Aorta (tissue), 5 donors: ENCODE measurements at regions of chr2 and their contacts with region 1.

Region 1: GRCh38 chr2:67234439-67234838 is 162.7 kb upstream of the ETAA1 start:
- DNase-seq: no peak
- ATAC-seq: no peak
- H3K4me3 ChIP-seq: no peak overlapping the region
- H3K27ac ChIP-seq: no peak overlapping the region
- H3K4me1 ChIP-seq: no peaks in the 10 kb centered on the region
- H3K27me3 ChIP-seq: no peaks in the 10 kb centered on the region

Region 2: GRCh38 chr2:65671670-65672242 is 1562.7 kb before region 1 on chr2:
- intact Hi-C with region 1: no loop called
- DNase-seq: no peak
- ATAC-seq: no peak
- H3K4me3 ChIP-seq: no peak overlapping the region
- H3K27ac ChIP-seq: no peak overlapping the region
- H3K4me1 ChIP-seq: no peaks in the 10 kb centered on the region
- H3K27me3 ChIP-seq: no peaks in the 10 kb centered on the region

Region 3: DNA sequence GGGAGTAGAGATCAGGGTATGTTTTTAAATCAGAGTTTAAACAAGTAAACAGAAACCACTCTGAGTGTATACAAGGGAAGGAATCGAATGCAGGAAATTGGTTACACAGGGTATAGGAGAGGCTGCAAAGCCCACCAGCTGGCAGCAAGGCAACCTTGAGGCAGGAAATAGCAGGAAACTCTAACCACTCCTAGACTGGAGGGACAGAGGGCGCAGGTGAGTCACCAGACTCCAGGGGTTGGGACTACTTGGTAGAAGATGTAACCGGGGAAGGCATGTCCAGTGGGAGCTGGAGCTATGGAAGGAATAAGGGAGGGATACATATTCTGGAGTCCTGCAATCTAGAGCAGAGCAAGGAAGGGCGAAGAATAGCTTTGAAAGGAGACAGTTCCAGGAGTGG is 647.2 kb before region 1 on chr2:
- intact Hi-C with region 1: loop called in 1 of 2 experiments (anchors 10 kb)
- DNase-seq: no peak
- ATAC-seq: no peak
- H3K4me3 ChIP-seq: no peak overlapping the region
- H3K27ac ChIP-seq: no peak overlapping the region
- H3K4me1 ChIP-seq: no peaks in the 10 kb centered on the region
- H3K27me3 ChIP-seq: no peaks in the 10 kb centered on the region

Region 4: GRCh38 chr2:66803726-66804125 is 430.7 kb before region 1 on chr2:
- intact Hi-C with region 1: no loop called
- DNase-seq: no peak
- ATAC-seq: no peak
- H3K4me3 ChIP-seq: no peak overlapping the region
- H3K27ac ChIP-seq: no peak overlapping the region
- H3K4me1 ChIP-seq: no peaks in the 10 kb centered on the region
- H3K27me3 ChIP-seq: no peaks in the 10 kb centered on the region

Region 5: GRCh38 chr2:67215214-67216055 is 19.0 kb before region 1 on chr2:
- intact Hi-C with region 1: no loop called
- DNase-seq: no peak
- ATAC-seq: no peak
- H3K4me3 ChIP-seq: no peak overlapping the region
- H3K27ac ChIP-seq: no peak overlapping the region
- H3K4me1 ChIP-seq: no peaks in the 10 kb centered on the region
- H3K27me3 ChIP-seq: no peaks in the 10 kb centered on the region